Endothelial cell of umbilical vein (primary cell): ENCODE measurements at regions of chr14 and their contacts with region 1.

Region 1: GRCh38 chr14:22200977-22201605 is 387.9 kb downstream of the DAD1 start:
- DNase-seq: peak; percentile 49
- H3K4me3 ChIP-seq: no peak overlapping the region
- H3K27ac ChIP-seq: no peak overlapping the region
- H3K4me1 ChIP-seq: no peaks in the 10 kb centered on the region
- H3K27me3 ChIP-seq: peaks cover 7 to 11% of the 10 kb centered on the region in 2 experiments
- CTCF ChIP-seq: peak; percentile 56 to 66
- POLR2A ChIP-seq: no peak

Region 2: GRCh38 chr14:22149058-22149457 is 52.0 kb before region 1 on chr14:
- CTCF ChIA-PET with region 1: no interaction called
- POLR2A ChIA-PET with region 1: no interaction called
- dilution Hi-C with region 1: no loop called
- intact Hi-C with region 1: no loop called
- DNase-seq: no peak
- H3K4me3 ChIP-seq: no peak overlapping the region
- H3K27ac ChIP-seq: no peak overlapping the region
- H3K4me1 ChIP-seq: no peaks in the 10 kb centered on the region
- H3K27me3 ChIP-seq: peaks cover 11 to 39% of the 10 kb centered on the region in 2 experiments
- CTCF ChIP-seq: no peak
- POLR2A ChIP-seq: no peak

Region 3: GRCh38 chr14:22163051-22163450 is 38.0 kb before region 1 on chr14:
- CTCF ChIA-PET with region 1: interaction called, 26 read pairs
- POLR2A ChIA-PET with region 1: no interaction called
- dilution Hi-C with region 1: no loop called
- intact Hi-C with region 1: no loop called
- DNase-seq: peak; percentile 23
- H3K4me3 ChIP-seq: no peak overlapping the region
- H3K27ac ChIP-seq: no peak overlapping the region
- H3K4me1 ChIP-seq: peaks cover 3% of the 10 kb centered on the region
- H3K27me3 ChIP-seq: peaks cover 10 to 11% of the 10 kb centered on the region in 2 experiments
- CTCF ChIP-seq: peak; percentile 7 to 18
- POLR2A ChIP-seq: no peak

Region 4: DNA sequence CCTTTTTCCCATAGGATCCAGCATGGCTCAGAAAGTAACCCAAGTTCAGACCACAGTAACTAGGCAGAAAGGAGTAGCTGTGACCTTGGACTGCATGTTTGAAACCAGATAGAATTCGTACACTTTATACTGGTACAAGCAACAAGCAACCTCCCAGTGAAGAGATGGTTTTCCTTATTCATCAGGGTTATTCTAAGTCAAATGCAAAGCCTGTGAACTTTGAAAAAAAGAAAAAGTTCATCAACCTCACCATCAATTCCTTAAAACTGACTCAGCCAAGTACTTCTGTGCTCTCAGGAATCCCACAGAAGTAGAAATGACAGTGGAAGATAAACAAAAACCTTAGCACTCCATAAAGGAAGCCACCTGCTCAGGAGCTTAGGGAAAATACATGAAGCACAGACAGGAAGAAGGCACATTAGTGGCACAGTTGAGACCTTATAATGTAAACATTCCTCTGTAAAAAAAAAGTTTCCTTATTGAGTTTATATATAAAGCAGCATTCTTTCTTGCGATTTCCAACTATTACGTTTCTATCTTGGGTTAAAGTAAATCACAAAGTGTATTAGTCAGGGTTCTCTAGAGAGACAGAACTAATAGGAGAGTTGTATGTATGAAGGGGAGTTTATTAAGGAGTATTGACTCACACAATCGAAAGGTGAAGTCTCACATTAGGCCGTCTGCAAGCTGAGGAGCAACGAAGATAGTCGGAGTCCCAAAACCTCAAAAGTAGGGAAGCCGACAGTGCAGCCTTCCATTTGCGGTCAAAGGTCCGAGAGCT is 10.5 kb before region 1 on chr14:
- CTCF ChIA-PET with region 1: interaction called, 30 read pairs
- POLR2A ChIA-PET with region 1: no interaction called
- dilution Hi-C with region 1: no loop called
- intact Hi-C with region 1: no loop called
- DNase-seq: no peak
- H3K4me3 ChIP-seq: no peak overlapping the region
- H3K27ac ChIP-seq: no peak overlapping the region
- H3K4me1 ChIP-seq: peaks cover 4% of the 10 kb centered on the region
- H3K27me3 ChIP-seq: no peaks in the 10 kb centered on the region
- CTCF ChIP-seq: no peak
- POLR2A ChIP-seq: no peak

Region 5: DNA sequence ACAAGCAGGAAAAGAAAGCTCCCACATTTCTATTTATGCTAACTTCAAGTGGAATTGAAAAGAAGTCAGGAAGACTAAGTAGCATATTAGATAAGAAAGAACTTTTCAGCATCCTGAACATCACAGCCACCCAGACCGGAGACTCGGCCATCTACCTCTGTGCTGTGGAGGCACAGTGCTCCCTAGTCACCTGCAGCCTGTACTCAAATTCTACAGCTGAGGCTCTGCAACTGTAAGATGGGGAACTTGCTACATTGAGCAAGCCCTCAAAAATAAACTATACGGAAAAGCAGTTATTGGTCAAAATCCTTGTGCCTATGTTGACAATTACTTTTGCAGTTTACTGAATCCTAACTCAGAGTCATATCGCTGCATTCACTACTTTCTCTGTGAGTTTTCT is 26.0 kb after region 1 on chr14:
- CTCF ChIA-PET with region 1: interaction called, 22 read pairs
- POLR2A ChIA-PET with region 1: no interaction called
- dilution Hi-C with region 1: no loop called
- intact Hi-C with region 1: no loop called
- DNase-seq: no peak
- H3K4me3 ChIP-seq: no peak overlapping the region
- H3K27ac ChIP-seq: no peak overlapping the region
- H3K4me1 ChIP-seq: peaks cover 11% of the 10 kb centered on the region
- H3K27me3 ChIP-seq: peaks cover 6 to 19% of the 10 kb centered on the region in 2 experiments
- CTCF ChIP-seq: no peak
- POLR2A ChIP-seq: no peak

Region 6: DNA sequence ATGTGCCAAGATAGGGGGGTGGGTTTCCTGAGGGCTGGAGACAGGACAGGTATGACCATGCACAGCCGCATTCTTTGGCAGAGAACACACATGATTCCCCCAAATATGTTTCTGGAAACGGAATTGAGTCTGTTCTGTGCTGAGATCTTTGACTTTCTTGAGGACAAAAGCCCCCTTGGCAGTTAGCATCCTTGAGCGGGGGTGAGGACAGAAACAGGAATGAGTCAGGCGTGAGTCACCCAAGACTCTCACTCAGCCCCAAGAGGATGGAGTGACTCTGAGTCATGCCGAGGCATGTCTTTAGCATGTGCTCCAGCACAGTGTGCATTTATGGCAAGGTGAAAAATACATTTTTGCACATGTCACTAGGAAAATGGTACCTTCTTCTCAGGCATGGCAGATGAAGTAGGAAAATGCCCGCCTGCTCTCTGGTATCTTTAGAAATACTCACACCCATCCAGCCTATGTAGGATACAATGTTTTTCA is 335.8 kb after region 1 on chr14:
- CTCF ChIA-PET with region 1: no interaction called
- POLR2A ChIA-PET with region 1: no interaction called
- dilution Hi-C with region 1: no loop called
- intact Hi-C with region 1: no loop called
- DNase-seq: peak; percentile 98
- H3K4me3 ChIP-seq: no peak overlapping the region
- H3K27ac ChIP-seq: peak overlapping the region; percentile 57
- H3K4me1 ChIP-seq: peaks cover 38% of the 10 kb centered on the region
- H3K27me3 ChIP-seq: no peaks in the 10 kb centered on the region
- CTCF ChIP-seq: no peak
- POLR2A ChIP-seq: no peak